ENCODE measurements at regions of chr14 and their contacts with region 1.

Region 1: DNA sequence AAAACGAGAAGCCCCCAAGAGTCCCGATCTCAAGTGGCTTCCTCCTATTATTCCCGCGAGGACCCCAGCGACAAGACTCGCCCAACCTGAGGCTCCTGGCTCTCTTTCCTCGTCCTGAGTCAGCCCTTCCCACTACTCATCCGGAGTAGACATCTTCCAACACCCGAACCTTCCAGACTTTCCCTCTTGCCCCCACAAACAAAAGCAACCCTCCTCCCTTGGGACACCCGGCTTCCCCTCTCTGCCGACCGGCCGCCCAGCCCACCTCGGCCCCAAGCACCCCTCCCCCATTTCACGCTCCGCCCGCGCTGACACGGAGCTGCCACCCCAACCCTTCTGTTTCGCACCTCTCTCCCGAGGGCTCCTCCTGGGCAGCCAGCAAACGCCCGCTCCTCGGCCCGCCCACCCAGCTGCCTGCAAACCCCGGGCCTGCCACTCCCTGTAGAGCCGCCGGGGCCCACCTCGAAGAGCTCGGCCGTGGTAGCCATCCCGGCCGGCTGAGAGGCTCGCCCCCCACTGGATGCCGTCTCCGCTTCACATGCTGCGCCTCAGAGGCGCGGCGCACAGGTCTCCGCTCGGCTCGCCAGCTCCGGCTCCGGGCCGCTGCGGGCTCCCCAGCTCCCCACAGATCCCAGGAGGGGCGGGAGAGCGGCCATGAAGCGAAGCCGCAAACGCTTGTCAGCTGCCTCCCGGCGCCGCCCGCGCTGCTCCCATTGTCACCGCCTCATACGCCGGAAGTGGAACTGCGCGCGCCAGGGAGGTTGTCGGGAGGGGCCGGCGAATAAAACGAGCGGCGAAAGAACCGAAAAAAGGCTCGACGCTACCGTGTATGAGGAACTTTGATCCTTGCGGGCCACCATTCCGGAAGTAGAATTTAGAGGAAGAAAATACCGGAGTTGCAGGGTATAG is at the starts of genes AP5M1 and EXOC5:
- DNase-seq: peak; percentile 85
- ATAC-seq: peak; percentile 83
- H3K4me3 Mint-ChIP-seq: peak within 1 kb of the TSS; percentile 98
- H3K27ac Mint-ChIP-seq: peak within 1 kb of the TSS; percentile 98
- H3K4me1 Mint-ChIP-seq: peaks cover 61% of the 10 kb centered on the region
- H3K27me3 Mint-ChIP-seq: no peaks in the 10 kb centered on the region
- CTCF ChIP-seq: no peak
- total RNA-seq, gene AP5M1: 48.4 and 54.6 TPM in 2 replicates
- total RNA-seq, gene EXOC5: 51.3 and 53.8 TPM in 2 replicates

Region 2: GRCh38 chr14:55579724-55580469 is 1688.5 kb before region 1 on chr14 and contains the start of gene KTN1:
- CTCF ChIA-PET with region 1: no interaction called
- POLR2A ChIA-PET with region 1: no interaction called
- intact Hi-C with region 1: loop called (anchors 1 kb)
- DNase-seq: peak; percentile 84
- ATAC-seq: peak; percentile 86
- H3K4me3 Mint-ChIP-seq: peak within 1 kb of the TSS; percentile 96
- H3K27ac Mint-ChIP-seq: peak within 1 kb of the TSS; percentile 91
- H3K4me1 Mint-ChIP-seq: peaks cover 33% of the 10 kb centered on the region
- H3K27me3 Mint-ChIP-seq: no peaks in the 10 kb centered on the region
- CTCF ChIP-seq: no peak
- total RNA-seq, gene KTN1: 108 and 116 TPM in 2 replicates

Region 3: GRCh38 chr14:56579345-56580220 is 688.8 kb before region 1 on chr14 and contains the start of gene TMEM260:
- CTCF ChIA-PET with region 1: no interaction called
- POLR2A ChIA-PET with region 1: interaction called, 16 read pairs
- intact Hi-C with region 1: loop called (anchors 1 kb)
- DNase-seq: peak; percentile 87
- ATAC-seq: peak; percentile 94
- H3K4me3 Mint-ChIP-seq: peak within 1 kb of the TSS; percentile 90
- H3K27ac Mint-ChIP-seq: peak within 1 kb of the TSS; percentile 96
- H3K4me1 Mint-ChIP-seq: peaks cover 35% of the 10 kb centered on the region
- H3K27me3 Mint-ChIP-seq: no peaks in the 10 kb centered on the region
- CTCF ChIP-seq: peak; percentile 78
- total RNA-seq, gene TMEM260: 22.0 and 24.7 TPM in 2 replicates

Region 4: GRCh38 chr14:57390028-57390805 is 121.8 kb after region 1 on chr14 and contains the start of gene NAA30:
- CTCF ChIA-PET with region 1: interaction called, 3 read pairs
- POLR2A ChIA-PET with region 1: interaction called, 32 read pairs
- intact Hi-C with region 1: loop called (anchors 1 kb)
- DNase-seq: peak; percentile 89
- ATAC-seq: peak; percentile 96
- H3K4me3 Mint-ChIP-seq: peak within 1 kb of the TSS; percentile 88
- H3K27ac Mint-ChIP-seq: peak within 1 kb of the TSS; percentile 89
- H3K4me1 Mint-ChIP-seq: peaks cover 40% of the 10 kb centered on the region
- H3K27me3 Mint-ChIP-seq: peaks cover 1% of the 10 kb centered on the region
- CTCF ChIP-seq: no peak
- total RNA-seq, gene NAA30: 12.8 and 14.6 TPM in 2 replicates

Region 5: DNA sequence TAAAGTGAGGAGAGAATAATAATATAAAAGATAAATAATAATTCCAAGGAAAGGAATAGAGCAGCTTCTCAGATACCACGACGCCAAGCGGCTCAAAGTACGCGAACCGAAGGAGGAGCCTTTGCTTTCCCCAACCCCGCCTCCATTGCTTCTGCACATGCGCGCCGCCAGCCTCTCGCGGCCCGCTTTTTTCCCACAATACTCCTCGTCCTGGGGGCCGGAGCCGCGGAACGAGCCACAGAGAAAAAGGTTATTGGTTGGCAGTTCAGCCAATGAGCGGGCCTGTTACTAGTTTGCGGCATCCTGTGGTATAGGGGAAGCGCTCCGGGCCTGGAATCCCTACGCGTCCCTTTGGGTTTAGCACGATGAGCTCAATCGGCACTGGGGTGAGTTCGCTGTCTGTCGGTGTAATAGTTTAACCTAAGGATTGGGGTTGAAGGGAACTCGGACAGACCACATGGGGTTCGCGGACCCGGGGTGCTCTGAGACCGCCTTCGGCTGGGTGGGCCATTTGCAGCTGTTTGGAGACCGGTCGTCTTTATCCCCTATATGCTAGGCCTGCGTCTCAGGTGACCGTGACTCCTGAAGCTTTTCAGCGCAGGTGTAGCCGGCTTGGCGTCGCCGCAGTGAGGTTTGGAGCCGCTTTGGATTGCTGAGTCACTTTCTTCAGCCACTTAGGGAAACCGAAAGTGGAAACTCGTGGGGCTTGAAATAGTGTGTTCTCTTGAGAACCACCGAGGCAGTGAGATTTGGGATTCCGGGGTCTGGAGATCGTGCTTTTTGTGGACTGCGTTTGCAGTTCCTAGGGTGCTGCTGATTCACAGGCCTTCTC is 976.4 kb after region 1 on chr14 and contains the start of gene PSMA3:
- CTCF ChIA-PET with region 1: no interaction called
- POLR2A ChIA-PET with region 1: no interaction called
- intact Hi-C with region 1: loop called (anchors 2 kb)
- DNase-seq: peak; percentile 94
- ATAC-seq: peak; percentile 91
- H3K4me3 Mint-ChIP-seq: peak within 1 kb of the TSS; percentile 98
- H3K27ac Mint-ChIP-seq: peak within 1 kb of the TSS; percentile 98
- H3K4me1 Mint-ChIP-seq: peaks cover 51% of the 10 kb centered on the region
- H3K27me3 Mint-ChIP-seq: peaks cover 1% of the 10 kb centered on the region
- CTCF ChIP-seq: no peak
- total RNA-seq, gene PSMA3: 204 and 208 TPM in 2 replicates

Measured in activated B cell treated with CpG ODN at 0.5 μM for 24 hours (primary cell).